PC-9 (cell line): ENCODE measurements at regions of chr12 and their contacts with region 1.

Region 1: GRCh38 chr12:13255792-13256691 is 59.5 kb downstream of the EMP1 start:
- DNase-seq: peak; percentile 80 to 99
- H3K4me3 ChIP-seq: peak overlapping the region; percentile 36; the same call in 1 of the 2 replicates
- H3K27ac ChIP-seq: no peak overlapping the region
- H3K4me1 ChIP-seq: peaks cover 14% of the 10 kb centered on the region
- H3K27me3 ChIP-seq: no peaks in the 10 kb centered on the region
- CTCF ChIP-seq: peak; percentile 97

Region 2: DNA sequence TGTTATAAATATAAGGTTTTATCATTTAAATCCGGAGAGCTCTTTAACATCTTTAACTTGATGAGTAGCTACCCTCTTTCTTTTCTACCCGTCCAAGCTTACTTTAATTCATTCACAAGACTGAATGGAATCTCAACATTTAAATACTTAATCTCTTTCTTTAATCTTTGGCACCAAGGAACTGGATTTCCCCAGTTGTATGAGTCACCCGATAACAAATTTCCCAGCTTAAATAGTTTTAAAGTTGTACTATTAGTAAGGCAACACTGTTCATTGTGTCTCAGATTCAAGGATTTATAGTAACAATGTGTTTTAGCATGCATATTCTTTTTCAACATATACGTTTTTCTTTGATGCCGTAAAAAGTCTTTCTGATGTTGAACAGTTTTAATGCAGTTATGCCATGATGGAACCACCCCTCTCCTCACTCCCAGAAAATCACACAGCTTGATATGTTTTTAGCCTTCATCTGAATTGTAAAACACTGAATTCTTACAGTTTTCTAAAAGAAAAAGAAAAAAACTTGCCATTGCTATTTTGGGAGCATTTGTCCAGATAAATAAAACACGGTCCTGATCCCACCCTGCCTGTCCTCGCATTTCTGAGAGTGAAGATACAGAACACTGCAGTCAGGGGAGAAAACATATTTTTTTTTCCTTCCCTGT is 973.1 kb before region 1 on chr12:
- CTCF ChIA-PET with region 1: no interaction called
- POLR2A ChIA-PET with region 1: no interaction called
- intact Hi-C with region 1: no loop called
- DNase-seq: peak in 1 of 2 experiments; percentile 81
- H3K4me3 ChIP-seq: no peak overlapping the region
- H3K27ac ChIP-seq: 0 out of 2 replicates have a peak overlapping the region, but pooled peaks have one; percentile 25
- H3K4me1 ChIP-seq: peaks cover 14% of the 10 kb centered on the region
- H3K27me3 ChIP-seq: no peaks in the 10 kb centered on the region
- CTCF ChIP-seq: no peak

Region 3: GRCh38 chr12:13061421-13062128 is 194.5 kb before region 1 on chr12:
- CTCF ChIA-PET with region 1: interaction called, 6 read pairs
- POLR2A ChIA-PET with region 1: interaction called, 10 read pairs
- intact Hi-C with region 1: no loop called
- DNase-seq: no peak
- H3K4me3 ChIP-seq: no peak overlapping the region
- H3K27ac ChIP-seq: no peak overlapping the region
- H3K4me1 ChIP-seq: 0 out of 2 replicates have a peak, but pooled peaks cover 10% of the 10 kb centered on the region
- H3K27me3 ChIP-seq: no peaks in the 10 kb centered on the region
- CTCF ChIP-seq: no peak

Region 4: DNA sequence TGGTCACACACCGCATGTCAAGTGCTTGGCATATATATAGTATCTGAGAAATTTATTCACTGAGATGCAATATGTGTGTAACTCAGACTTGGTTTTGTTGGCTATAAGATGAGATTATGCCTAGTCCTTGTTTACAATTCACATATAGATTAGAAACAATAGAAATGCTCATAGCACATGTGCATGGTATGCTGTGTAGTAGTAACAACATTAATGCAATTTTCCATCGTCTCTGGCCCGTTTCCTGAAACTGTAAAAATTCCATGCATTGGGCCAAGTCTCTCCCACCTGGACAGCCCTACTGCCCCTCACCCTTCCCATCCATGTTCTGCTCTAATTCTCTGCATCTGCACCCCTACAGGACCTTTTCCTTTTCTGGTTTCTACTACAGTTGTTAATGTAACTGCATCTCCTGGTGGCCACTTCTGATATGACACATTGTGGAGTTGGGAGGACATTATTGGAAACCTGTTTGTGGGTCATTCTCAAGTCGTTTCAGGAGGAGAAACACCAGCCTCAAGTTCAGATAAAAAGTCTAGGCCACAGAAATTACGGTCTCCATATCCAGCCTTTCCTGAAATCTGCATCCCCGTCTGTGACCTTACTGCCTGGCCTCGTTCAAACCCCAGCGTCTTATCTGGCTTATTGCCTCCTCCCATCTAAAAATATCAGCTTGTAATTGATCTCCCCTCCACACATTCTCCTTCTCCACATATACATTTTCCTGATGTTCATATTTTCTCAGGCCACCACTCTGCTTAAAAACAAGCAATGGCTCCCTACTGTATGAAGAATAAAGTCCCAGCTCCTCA is 22.0 kb before region 1 on chr12:
- CTCF ChIA-PET with region 1: interaction called, 12 read pairs
- POLR2A ChIA-PET with region 1: no interaction called
- intact Hi-C with region 1: no loop called
- DNase-seq: peak in 1 of 2 experiments; percentile 62
- H3K4me3 ChIP-seq: no peak overlapping the region
- H3K27ac ChIP-seq: no peak overlapping the region
- H3K4me1 ChIP-seq: peaks cover 8% of the 10 kb centered on the region; the same call in 1 of the 2 replicates
- H3K27me3 ChIP-seq: no peaks in the 10 kb centered on the region
- CTCF ChIP-seq: peak; percentile 96

Region 5: DNA sequence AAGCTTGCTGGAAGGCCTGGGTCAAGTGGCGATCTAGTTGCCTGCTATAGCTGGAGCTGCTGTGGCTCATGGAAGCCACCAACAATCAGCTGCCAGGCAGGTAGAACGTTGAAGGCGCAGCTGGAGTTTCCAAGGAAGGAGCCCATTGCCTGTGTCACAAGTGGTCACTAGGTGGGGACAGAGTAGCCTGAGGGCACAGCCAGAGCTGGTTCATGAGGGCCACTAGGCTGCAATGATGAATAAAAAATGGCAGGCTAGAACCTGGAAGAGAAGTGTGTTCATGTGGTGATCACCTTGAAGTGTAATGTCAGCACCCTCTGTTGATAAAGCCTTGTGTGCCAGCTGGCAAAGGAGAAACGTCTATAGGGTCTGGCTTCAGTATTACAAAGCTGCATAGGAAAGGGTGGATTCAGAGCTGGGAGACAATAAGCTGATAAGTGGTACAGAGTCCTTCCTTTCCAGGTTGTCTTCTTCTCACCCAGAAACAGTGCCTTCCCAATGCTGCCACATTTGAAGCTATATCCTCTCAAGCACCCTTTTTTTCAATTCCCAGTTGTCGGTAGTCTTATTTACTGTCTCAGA is 106.3 kb after region 1 on chr12:
- CTCF ChIA-PET with region 1: interaction called, 10 read pairs
- POLR2A ChIA-PET with region 1: no interaction called
- intact Hi-C with region 1: no loop called
- DNase-seq: peak in 1 of 2 experiments; percentile 82
- H3K4me3 ChIP-seq: no peak overlapping the region
- H3K27ac ChIP-seq: no peak overlapping the region
- H3K4me1 ChIP-seq: no peaks in the 10 kb centered on the region
- H3K27me3 ChIP-seq: no peaks in the 10 kb centered on the region
- CTCF ChIP-seq: peak; percentile 72

Region 6: DNA sequence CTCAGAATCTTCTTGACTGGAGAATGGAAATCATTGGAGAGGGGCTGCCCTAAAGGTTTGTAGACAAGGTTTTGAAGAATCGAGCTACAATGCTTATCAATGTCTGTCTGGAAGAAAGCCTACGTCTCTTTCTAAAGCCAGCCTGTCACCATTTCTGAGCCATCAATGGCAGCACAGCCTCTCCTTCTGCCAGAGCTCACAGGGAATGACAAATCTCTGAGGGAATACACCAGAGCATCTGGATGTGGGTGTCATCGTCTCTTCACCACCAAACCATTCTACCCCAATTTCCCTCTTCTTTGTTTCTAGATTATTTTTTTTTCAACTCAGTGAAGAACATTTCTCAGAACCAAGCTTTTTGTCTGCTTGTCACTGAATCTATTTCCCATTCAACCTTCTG is 290.2 kb after region 1 on chr12:
- CTCF ChIA-PET with region 1: no interaction called
- POLR2A ChIA-PET with region 1: no interaction called
- intact Hi-C with region 1: no loop called
- DNase-seq: no peak
- H3K4me3 ChIP-seq: no peak overlapping the region
- H3K27ac ChIP-seq: no peak overlapping the region
- H3K4me1 ChIP-seq: 0 out of 2 replicates have a peak, but pooled peaks cover 7% of the 10 kb centered on the region
- H3K27me3 ChIP-seq: no peaks in the 10 kb centered on the region
- CTCF ChIP-seq: no peak

Region 7: DNA sequence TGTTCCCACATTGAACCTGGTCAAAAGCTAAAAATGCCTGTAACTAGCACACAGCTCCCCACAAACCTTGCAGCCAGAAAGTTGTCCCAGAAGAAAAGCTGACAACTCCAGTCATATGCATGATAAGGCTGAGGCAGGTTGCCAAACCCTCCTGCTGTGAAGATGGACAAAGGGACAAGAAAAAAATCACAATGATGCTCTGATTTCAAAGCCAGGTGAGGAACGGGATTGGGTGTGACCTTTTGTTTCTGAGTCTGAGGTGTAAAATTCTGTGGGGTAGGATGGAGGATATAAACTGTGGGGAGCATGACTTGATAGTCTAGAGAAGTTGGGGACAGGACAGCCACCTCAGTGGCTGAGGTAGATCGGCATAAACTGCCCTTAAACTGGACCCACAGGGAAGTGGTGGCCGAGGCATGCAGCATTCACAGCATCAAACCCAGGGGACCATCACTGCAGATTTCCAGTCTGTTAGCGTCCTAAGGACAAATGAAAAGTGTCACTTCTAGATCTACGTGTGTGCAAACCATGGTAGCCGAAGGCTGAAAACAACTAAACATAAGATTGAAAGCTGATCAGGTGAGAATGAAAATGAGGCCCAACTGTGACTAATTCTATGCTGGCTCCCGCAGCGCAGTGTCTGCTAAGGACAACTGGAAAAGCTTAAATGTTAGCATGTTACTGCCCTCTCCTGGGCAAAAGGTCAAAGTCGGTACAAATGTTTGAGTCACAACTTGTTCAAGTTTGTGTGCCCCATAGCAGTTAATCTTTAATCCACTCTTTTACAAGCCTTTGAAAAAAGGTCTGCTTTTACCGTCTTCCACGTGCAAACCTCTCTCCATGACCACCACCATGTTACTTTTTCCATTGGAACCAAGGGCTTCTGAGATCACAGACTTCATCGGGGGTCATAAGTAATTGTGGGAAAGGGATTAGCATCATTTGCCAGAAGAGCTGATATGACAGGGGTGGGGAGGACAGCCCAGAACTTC is 685.5 kb after region 1 on chr12:
- CTCF ChIA-PET with region 1: interaction called, 3 read pairs
- POLR2A ChIA-PET with region 1: no interaction called
- intact Hi-C with region 1: loop called (anchors 5 kb)
- DNase-seq: peak; percentile 53 to 68
- H3K4me3 ChIP-seq: no peak overlapping the region
- H3K27ac ChIP-seq: no peak overlapping the region
- H3K4me1 ChIP-seq: no peaks in the 10 kb centered on the region; the same call in 1 of the 2 replicates
- H3K27me3 ChIP-seq: no peaks in the 10 kb centered on the region
- CTCF ChIP-seq: peak; percentile 61